ENCODE measurements at regions of chr17 and their contacts with region 1.

Region 1: GRCh38 chr17:12646761-12647422 is 18.8 kb upstream of the MYOCD start:
- DNase-seq: no peak
- ATAC-seq: peak; percentile 67
- H3K4me3 ChIP-seq: no peak overlapping the region
- H3K27ac ChIP-seq: peak overlapping the region; percentile 24; the same call in 1 of the 2 replicates
- H3K4me1 ChIP-seq: peaks cover 3% of the 10 kb centered on the region; the same call in 1 of the 2 replicates
- H3K27me3 ChIP-seq: 0 out of 2 replicates have a peak, but pooled peaks cover 2% of the 10 kb centered on the region
- CTCF ChIP-seq: no peak
- POLR2A ChIP-seq: no peak
- RAD21 ChIP-seq: no peak

Region 2: GRCh38 chr17:12068946-12069345 is 577.9 kb before region 1 on chr17:
- CTCF ChIA-PET with region 1: no interaction called
- POLR2A ChIA-PET with region 1: no interaction called
- dilution Hi-C with region 1: no loop called
- in situ Hi-C with region 1: no loop called
- intact Hi-C with region 1: no loop called
- DNase-seq: peak; percentile 5
- ATAC-seq: no peak
- H3K4me3 ChIP-seq: no peak overlapping the region
- H3K27ac ChIP-seq: no peak overlapping the region
- H3K4me1 ChIP-seq: peaks cover 2% of the 10 kb centered on the region
- H3K27me3 ChIP-seq: no peaks in the 10 kb centered on the region
- CTCF ChIP-seq: no peak
- POLR2A ChIP-seq: no peak
- RAD21 ChIP-seq: no peak

Region 3: DNA sequence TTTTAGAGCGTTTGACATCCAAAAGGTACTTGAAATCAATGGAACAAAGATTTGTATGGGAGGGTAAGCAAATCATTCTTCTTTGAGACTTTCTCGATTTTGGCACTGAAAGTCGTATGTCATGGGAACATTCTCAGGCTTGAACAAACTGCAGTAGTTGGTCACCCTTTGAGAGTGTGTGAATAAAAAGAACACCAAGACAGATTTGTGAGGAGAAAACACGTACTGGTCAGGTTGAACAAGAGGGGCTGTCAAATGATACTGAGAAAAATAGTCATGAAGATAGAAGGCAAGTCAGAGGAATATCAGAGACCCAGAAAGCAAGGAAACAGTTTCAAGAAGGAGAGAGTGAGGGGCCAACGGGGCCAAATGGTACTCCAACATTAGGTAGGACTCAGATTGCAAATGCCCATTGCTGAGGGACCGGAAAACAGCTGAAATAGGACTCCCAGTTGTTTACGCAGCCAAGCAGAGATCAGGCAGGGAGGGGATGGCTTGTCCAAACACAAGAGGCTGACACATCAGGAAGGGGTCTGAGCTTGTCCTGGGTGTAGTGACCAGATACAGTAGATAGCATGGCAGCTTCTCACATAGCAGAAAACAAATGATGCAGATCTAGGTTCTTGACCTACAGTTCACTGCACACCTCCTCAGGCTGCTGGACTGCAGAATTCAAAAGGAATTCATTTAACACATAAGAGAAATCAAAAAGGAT is 55.7 kb before region 1 on chr17:
- CTCF ChIA-PET with region 1: no interaction called
- POLR2A ChIA-PET with region 1: interaction called, 12 read pairs
- dilution Hi-C with region 1: no loop called
- in situ Hi-C with region 1: no loop called
- intact Hi-C with region 1: no loop called
- DNase-seq: peak; percentile 76
- ATAC-seq: peak; percentile 92
- H3K4me3 ChIP-seq: no peak overlapping the region
- H3K27ac ChIP-seq: peak overlapping the region; percentile 19; the same call in 1 of the 2 replicates
- H3K4me1 ChIP-seq: peaks cover 6% of the 10 kb centered on the region
- H3K27me3 ChIP-seq: no peaks in the 10 kb centered on the region
- CTCF ChIP-seq: no peak
- POLR2A ChIP-seq: no peak
- RAD21 ChIP-seq: no peak

Measured in IMR-90 (cell line).